ENCODE measurements at regions of chr11 and their contacts with region 1.

Region 1: DNA sequence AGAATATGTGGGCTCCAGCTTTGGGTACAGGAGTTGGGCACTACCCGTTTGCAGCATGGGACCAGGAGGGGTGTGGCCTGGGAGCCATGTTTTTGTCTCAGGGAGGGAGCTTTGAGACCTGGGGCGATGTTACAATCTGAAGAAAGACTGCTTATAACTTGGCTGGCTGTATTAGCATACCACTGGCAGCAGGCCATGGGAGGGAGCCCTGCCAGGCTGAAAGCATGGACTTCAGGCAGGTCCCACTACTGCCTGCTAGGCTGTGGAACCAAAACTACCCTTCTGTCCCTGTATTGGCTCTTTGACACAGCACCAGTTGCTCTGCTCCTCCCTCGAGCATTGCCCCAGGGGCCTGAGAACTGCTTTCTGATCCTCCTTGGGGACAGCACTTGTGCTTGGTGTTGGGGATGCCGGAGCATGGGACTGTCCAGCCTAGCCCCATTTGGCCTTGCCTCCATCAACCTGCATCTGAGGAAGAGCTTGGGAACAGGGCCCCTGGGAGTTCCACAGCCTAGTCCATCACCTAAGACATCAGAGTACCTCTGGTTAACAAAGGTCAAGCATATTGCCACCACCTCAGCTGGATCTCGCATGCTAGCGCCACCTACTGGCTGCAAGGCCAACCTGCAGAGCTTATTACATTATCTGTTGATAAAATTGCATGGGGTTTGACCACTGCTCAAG is 217.4 kb downstream of the SBF2 start:
- DNase-seq: peak; percentile 28
- H3K4me3 ChIP-seq: no peak overlapping the region
- H3K27ac ChIP-seq: no peak overlapping the region
- H3K4me1 ChIP-seq: no peaks in the 10 kb centered on the region
- H3K27me3 ChIP-seq: no peaks in the 10 kb centered on the region
- CTCF ChIP-seq: peak; percentile 51 to 84
- POLR2A ChIP-seq: no peak

Region 2: GRCh38 chr11:9462806-9463537 is 613.6 kb before region 1 on chr11:
- CTCF ChIA-PET with region 1: no interaction called
- POLR2A ChIA-PET with region 1: no interaction called
- dilution Hi-C with region 1: no loop called
- intact Hi-C with region 1: no loop called
- DNase-seq: no peak
- H3K4me3 ChIP-seq: no peak overlapping the region
- H3K27ac ChIP-seq: no peak overlapping the region
- H3K4me1 ChIP-seq: peaks cover 15% of the 10 kb centered on the region
- H3K27me3 ChIP-seq: no peaks in the 10 kb centered on the region
- CTCF ChIP-seq: no peak
- POLR2A ChIP-seq: no peak

Region 3: GRCh38 chr11:9972989-9973388 is 103.6 kb before region 1 on chr11:
- CTCF ChIA-PET with region 1: interaction called, 5 read pairs
- POLR2A ChIA-PET with region 1: no interaction called
- dilution Hi-C with region 1: no loop called
- intact Hi-C with region 1: loop called (anchors 1 kb)
- DNase-seq: peak; percentile 74
- H3K4me3 ChIP-seq: no peak overlapping the region
- H3K27ac ChIP-seq: no peak overlapping the region
- H3K4me1 ChIP-seq: peaks cover 14% of the 10 kb centered on the region
- H3K27me3 ChIP-seq: no peaks in the 10 kb centered on the region
- CTCF ChIP-seq: peak; percentile 58 to 61
- POLR2A ChIP-seq: no peak